Activated T-helper 1 cell treated with anti-CD3 and anti-CD28 coated beads, Interleukin-12 subunit alpha, Interleukin-12 subunit beta, Interleukin-2, Interleukin-4 antibody, amounts not matched to agents 30 ng/mL and 10 ng/mL and 1 ng/mL, durations not matched to agents 14 hours and 24 hours and 36 hours (primary cell): ENCODE measurements at regions of chr22 and their contacts with region 1.

Region 1: DNA sequence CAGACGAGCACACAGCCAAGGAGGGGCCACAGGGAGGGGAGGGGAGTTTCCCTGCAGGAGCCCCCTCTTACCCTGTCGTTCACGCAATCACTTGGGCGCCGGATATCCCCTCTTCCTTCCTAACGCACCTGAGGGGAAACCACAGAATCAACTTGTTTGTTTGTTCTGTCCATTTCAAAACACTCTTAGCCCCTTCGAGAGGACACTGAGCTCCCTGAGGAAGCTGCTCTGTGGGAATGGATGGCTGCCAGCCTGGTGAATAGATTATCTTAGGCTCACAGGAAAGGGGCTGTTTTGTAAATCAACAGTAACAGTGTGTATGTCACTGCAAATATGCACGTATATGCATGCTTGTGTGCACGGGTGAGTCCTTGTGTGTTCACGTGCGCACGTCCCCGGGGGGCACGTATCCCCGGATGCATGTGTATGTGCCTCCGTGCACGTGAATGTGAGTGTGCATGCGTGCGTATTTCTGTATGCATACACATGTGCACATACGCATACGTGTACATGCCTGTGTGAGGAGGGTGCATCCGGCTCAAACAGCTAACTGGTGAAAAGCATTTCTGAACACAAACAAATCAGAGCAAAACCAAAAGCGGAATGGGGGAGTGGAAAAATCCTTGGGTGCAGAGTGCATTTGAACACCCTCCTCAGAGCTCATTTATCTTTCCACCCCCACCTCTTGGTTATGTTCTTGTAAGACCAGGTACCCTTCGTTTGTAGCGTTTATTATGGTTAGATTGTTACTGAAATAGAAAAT is 7.2 kb downstream of the ARSA start:
- DNase-seq: peak; percentile 72
- H3K4me3 Mint-ChIP-seq: peak overlapping the region; percentile 85
- H3K27ac Mint-ChIP-seq: peak overlapping the region; percentile 98
- H3K4me1 Mint-ChIP-seq: peaks cover 37% of the 10 kb centered on the region
- H3K27me3 Mint-ChIP-seq: no peaks in the 10 kb centered on the region

Region 2: GRCh38 chr22:50250555-50251476 is 370.0 kb before region 1 on chr22 and contains the start of gene HDAC10:
- intact Hi-C with region 1: loop called (anchors 2 kb)
- DNase-seq: peak; percentile 84
- H3K4me3 Mint-ChIP-seq: peak within 1 kb of the TSS; percentile 85
- H3K27ac Mint-ChIP-seq: peak within 1 kb of the TSS; percentile 83
- H3K4me1 Mint-ChIP-seq: peaks cover 5% of the 10 kb centered on the region
- H3K27me3 Mint-ChIP-seq: no peaks in the 10 kb centered on the region
- total RNA-seq, gene HDAC10: 67.4 and 68.1 TPM in 2 replicates

Region 3: DNA sequence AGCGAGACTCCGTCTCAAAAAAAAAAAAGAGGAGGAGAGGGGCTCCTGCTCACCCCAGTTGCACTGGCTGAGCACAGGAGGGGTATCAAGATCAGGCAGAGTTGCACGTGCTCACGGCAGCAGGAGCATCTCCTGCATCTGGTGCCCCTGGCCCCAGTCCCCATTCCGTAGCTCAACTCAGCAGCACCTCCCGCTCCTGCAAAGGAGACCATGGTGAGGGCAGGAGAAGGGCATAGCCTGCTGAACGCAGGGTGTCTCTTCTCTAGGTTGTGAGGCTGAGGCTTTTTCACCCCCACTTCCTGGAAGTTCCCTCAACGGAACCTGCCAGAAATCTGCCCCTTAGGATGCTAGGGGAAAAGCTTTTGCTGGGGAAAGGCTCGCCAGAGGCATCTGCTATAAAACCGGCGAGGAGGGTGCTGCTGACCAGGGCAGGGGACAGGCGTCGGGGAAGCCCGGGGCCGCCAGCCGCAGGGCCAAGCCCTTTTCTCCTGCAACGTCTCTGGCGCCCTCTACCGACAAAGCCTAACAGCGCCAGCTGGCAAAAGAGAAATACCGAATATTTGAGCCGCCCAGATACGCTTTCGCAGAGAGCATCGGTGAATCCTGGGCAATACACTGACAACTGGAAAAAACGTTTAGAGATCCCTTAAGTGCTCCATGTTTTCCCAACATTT is 278.7 kb before region 1 on chr22:
- intact Hi-C with region 1: loop called (anchors 2 kb)
- DNase-seq: peak; percentile 80
- H3K4me3 Mint-ChIP-seq: peak overlapping the region; percentile 83
- H3K27ac Mint-ChIP-seq: peak overlapping the region; percentile 78
- H3K4me1 Mint-ChIP-seq: peaks cover 11% of the 10 kb centered on the region
- H3K27me3 Mint-ChIP-seq: peaks cover 2% of the 10 kb centered on the region

Region 4: DNA sequence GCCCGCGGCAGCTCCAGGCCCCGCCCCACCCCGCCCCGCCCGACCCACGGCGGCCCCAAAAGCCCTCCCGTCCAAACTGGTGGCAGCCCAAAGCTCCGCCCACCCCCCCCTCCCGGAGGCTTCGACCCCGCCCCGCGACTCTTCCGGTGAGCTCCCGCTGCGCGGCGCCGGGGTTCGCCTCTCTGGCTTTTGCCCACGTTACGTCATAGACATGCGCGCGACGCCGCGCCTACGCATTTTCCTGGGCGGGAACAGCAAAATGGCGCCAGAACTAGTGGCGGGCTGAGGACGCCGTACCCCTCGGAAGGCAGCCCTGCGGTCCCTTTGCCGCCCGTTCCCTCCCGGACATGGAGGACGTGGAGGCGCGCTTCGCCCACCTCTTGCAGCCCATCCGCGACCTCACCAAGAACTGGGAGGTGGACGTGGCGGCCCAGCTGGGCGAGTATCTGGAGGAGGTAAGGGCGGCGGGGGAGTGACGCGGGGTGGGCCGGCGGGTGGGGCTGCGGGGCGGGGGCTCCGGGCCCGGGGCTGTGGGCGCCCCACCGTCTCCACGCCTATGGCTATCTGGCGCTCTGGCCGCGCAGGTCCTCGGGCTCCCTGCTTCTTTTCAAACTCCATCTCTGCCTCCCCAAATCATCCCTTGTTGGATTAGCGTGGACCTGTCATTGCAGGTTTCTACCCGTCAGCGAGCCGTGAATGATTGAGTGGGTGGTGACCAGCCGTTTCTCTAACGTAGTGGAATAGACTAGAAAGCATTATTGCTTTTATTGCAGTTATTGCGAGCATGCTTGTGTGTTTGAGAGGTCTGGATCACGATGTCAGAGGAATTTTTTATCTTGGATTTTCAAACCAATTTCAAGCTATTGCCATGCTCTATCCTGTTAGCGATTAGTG is 112.5 kb before region 1 on chr22 and contains the start of gene NCAPH2:
- intact Hi-C with region 1: loop called (anchors 1 kb)
- DNase-seq: peak; percentile 97
- H3K4me3 Mint-ChIP-seq: peak within 1 kb of the TSS; percentile 96
- H3K27ac Mint-ChIP-seq: peak within 1 kb of the TSS; percentile 95
- H3K4me1 Mint-ChIP-seq: peaks cover 24% of the 10 kb centered on the region
- H3K27me3 Mint-ChIP-seq: no peaks in the 10 kb centered on the region
- total RNA-seq, gene NCAPH2: 133 and 134 TPM in 2 replicates

Region 5: GRCh38 chr22:50530877-50531545 is 89.8 kb before region 1 on chr22:
- intact Hi-C with region 1: loop called (anchors 1 kb)
- DNase-seq: peak; percentile 83
- H3K4me3 Mint-ChIP-seq: peak overlapping the region; percentile 93
- H3K27ac Mint-ChIP-seq: peak overlapping the region; percentile 99
- H3K4me1 Mint-ChIP-seq: peaks cover 48% of the 10 kb centered on the region
- H3K27me3 Mint-ChIP-seq: no peaks in the 10 kb centered on the region

Region 6: GRCh38 chr22:50582562-50583293 is 38.0 kb before region 1 on chr22 and contains the start of gene CHKB:
- intact Hi-C with region 1: loop called (anchors 1 kb)
- DNase-seq: peak; percentile 100
- H3K4me3 Mint-ChIP-seq: peak within 1 kb of the TSS; percentile 94
- H3K27ac Mint-ChIP-seq: peak within 1 kb of the TSS; percentile 96
- H3K4me1 Mint-ChIP-seq: peaks cover 22% of the 10 kb centered on the region
- H3K27me3 Mint-ChIP-seq: no peaks in the 10 kb centered on the region
- total RNA-seq, gene CHKB: 81.0 and 88.7 TPM in 2 replicates

Region 7: GRCh38 chr22:50683086-50683993 is 62.6 kb after region 1 on chr22:
- intact Hi-C with region 1: no loop called
- DNase-seq: no peak
- H3K4me3 Mint-ChIP-seq: no peak overlapping the region
- H3K27ac Mint-ChIP-seq: no peak overlapping the region
- H3K4me1 Mint-ChIP-seq: no peaks in the 10 kb centered on the region
- H3K27me3 Mint-ChIP-seq: no peaks in the 10 kb centered on the region